B cell (primary cell): ENCODE measurements at regions of chr21 and their contacts with region 1.

Region 1: GRCh38 chr21:41832596-41833496 is 46.3 kb downstream of the PRDM15 start:
- DNase-seq: no peak
- ATAC-seq: peak; percentile 31
- H3K4me3 ChIP-seq: no peak overlapping the region
- H3K4me3 Mint-ChIP-seq: peak overlapping the region; percentile 49
- H3K27ac ChIP-seq: peak overlapping the region in 1 of 2 donors; percentile 6
- H3K27ac Mint-ChIP-seq: peak overlapping the region; percentile 66
- H3K4me1 ChIP-seq: peaks cover 6 to 42% of the 10 kb centered on the region in 2 donors
- H3K4me1 Mint-ChIP-seq: peaks cover 45% of the 10 kb centered on the region
- H3K27me3 ChIP-seq: no peaks in the 10 kb centered on the region
- H3K27me3 Mint-ChIP-seq: no peaks in the 10 kb centered on the region
- CTCF ChIP-seq: no peak

Region 2: GRCh38 chr21:41868062-41868710 is 35.3 kb after region 1 on chr21:
- CTCF ChIA-PET with region 1: no interaction called
- POLR2A ChIA-PET with region 1: no interaction called
- intact Hi-C with region 1: loop called (anchors 5 kb)
- DNase-seq: peak; percentile 65
- ATAC-seq: peak; percentile 76
- H3K4me3 ChIP-seq: no peak overlapping the region
- H3K4me3 Mint-ChIP-seq: peak overlapping the region; percentile 61
- H3K27ac ChIP-seq: no peak overlapping the region
- H3K27ac Mint-ChIP-seq: no peak overlapping the region
- H3K4me1 ChIP-seq: peaks cover 31 to 41% of the 10 kb centered on the region in 2 donors
- H3K4me1 Mint-ChIP-seq: peaks cover 58% of the 10 kb centered on the region
- H3K27me3 ChIP-seq: no peaks in the 10 kb centered on the region
- H3K27me3 Mint-ChIP-seq: no peaks in the 10 kb centered on the region
- CTCF ChIP-seq: no peak